Gastrocnemius medialis (tissue), 4 donors: ENCODE measurements at regions of chr22 and their contacts with region 1.

Region 1: DNA sequence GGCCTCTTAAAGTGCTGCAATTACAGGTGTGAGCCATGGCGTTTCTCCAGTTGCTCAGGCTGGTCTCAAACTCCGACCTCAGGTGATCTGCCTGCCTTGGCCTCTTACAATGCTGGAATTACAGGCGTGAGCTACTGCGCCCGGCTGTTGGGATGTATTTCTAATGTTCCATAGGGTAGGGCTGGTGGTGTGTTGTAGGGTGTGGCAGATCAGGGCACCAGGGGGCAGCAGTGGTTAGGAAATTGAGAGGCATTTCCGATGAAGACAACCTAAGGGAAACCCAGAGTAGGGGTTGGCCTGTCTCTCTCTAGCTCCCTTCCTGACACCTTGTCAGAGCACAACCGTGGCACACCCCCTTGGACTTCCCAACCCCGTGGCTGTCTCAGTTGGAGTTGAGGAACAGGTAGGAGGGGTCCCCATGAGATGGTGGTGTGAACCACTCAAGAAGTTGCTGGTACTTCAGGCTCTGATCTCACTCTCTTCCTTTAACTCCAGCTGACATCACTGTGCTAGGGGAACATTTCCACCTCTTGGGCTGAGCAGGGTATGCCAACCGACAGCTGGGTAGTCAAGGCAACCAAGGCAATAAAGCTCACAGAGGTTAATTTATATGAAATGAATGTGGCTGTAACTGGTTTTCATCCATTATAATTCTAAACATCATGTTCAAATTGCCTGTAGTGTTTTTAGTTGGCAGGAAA is 33.0 kb downstream of the YWHAH start:
- DNase-seq: peak; percentile 48 to 70
- ATAC-seq: peak; percentile 89 to 90
- H3K4me3 ChIP-seq: no peak overlapping the region
- H3K27ac ChIP-seq: no peak overlapping the region
- H3K4me1 ChIP-seq: no peaks in the 10 kb centered on the region
- H3K27me3 ChIP-seq: no peaks in the 10 kb centered on the region
- CTCF ChIP-seq: peak; percentile 70 to 84 (median 76)
- POLR2A ChIP-seq: no peak

Region 2: GRCh38 chr22:31652911-31653684 is 324.2 kb before region 1 on chr22:
- in situ Hi-C with region 1: no loop called
- intact Hi-C with region 1: no loop called
- DNase-seq: no peak
- ATAC-seq: no peak
- H3K4me3 ChIP-seq: no peak overlapping the region
- H3K27ac ChIP-seq: peak overlapping the region; percentile 49 to 72 (median 60)
- H3K4me1 ChIP-seq: peaks cover 23 to 32% of the 10 kb centered on the region in 2 donors
- H3K27me3 ChIP-seq: no peaks in the 10 kb centered on the region
- CTCF ChIP-seq: no peak
- POLR2A ChIP-seq: no peak

Region 3: GRCh38 chr22:32042924-32043790 is 65.9 kb after region 1 on chr22 and contains the start of gene SLC5A1:
- in situ Hi-C with region 1: no loop called
- intact Hi-C with region 1: loop called (anchors 5 kb)
- DNase-seq: no peak
- ATAC-seq: no peak
- H3K4me3 ChIP-seq: no peak within 1 kb of the TSS
- H3K27ac ChIP-seq: peak within 1 kb of the TSS in 1 of 4 donors; percentile 63
- H3K4me1 ChIP-seq: peaks cover 10 to 17% of the 10 kb centered on the region in 2 donors
- H3K27me3 ChIP-seq: no peaks in the 10 kb centered on the region
- CTCF ChIP-seq: no peak
- POLR2A ChIP-seq: no peak
- total RNA-seq, gene SLC5A1: 0.24 TPM in 1 of 4 donors, not detected in the others

Region 4: DNA sequence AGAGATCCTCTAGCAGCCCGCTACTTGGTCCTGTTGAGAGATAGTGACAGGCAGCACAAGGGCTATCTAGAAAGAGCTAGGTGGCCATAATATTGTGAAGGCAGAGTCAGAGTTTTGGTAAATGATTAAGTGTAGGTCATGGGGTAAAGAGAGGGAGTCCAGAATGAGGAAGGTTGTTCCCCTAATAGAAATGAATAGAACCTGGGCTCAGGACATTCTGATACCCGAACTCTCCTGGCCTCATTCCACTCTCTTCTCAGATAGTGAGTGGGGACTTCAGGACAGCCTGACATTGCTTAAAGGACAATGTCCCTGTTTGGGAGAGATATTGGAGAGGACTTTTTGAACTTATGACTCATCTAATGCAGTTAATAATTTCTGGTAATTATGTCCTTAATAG is 86.4 kb after region 1 on chr22:
- in situ Hi-C with region 1: no loop called
- intact Hi-C with region 1: no loop called
- DNase-seq: no peak
- ATAC-seq: no peak
- H3K4me3 ChIP-seq: no peak overlapping the region
- H3K27ac ChIP-seq: no peak overlapping the region
- H3K4me1 ChIP-seq: peaks cover 4 to 6% of the 10 kb centered on the region in 2 donors
- H3K27me3 ChIP-seq: no peaks in the 10 kb centered on the region
- CTCF ChIP-seq: no peak
- POLR2A ChIP-seq: no peak

Region 5: GRCh38 chr22:32080904-32081303 is 103.6 kb after region 1 on chr22:
- in situ Hi-C with region 1: loop called (anchors 5 to 10 kb)
- intact Hi-C with region 1: loop called (anchors 1 kb)
- DNase-seq: peak in 1 of 2 donors; percentile 25
- ATAC-seq: peak; percentile 75 to 77
- H3K4me3 ChIP-seq: no peak overlapping the region
- H3K27ac ChIP-seq: no peak overlapping the region
- H3K4me1 ChIP-seq: peaks cover 20 to 22% of the 10 kb centered on the region in 2 donors
- H3K27me3 ChIP-seq: no peaks in the 10 kb centered on the region
- CTCF ChIP-seq: peak; percentile 66 to 75 (median 70)
- POLR2A ChIP-seq: no peak

Region 6: DNA sequence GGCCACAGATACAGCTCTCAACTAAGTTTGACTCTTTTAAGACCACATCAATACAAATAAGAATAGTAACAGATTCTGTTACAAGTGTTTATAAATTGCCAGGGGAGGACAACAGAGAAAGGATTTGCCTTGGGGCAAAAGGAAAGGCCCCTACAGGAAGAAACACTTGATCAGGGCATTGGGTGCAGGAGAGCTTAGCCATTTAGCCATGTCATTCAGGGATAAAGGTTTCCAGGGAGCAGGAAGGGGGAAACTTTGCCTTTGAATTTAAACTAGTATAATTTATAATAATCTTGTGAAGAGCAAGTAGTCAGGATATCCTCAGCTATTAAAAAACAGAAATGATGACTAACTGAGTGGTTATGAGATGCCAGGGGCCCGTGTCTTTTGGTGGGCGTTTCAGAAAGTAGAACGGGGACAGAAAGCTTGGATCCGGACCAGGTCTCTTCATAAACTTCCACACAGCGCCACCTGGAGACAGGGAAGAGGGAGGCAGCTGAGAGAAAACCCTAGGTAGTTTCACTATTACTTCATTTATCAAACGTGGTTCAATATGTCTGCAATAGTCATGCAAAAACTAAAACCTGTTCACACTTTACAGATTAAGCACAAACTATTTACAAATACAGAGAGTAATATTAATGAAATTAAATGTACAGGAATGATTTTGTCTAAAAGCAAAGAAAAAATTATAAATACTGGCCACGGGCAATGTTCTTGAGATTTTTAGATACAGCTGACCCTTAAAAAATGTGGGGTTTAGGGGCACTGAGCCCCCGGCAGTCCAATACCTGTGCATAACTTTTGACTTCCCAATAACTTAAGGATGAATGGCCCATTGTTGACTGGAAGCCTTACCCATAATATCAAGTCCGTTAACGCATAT is 288.8 kb after region 1 on chr22:
- in situ Hi-C with region 1: loop called in 3 of 4 experiments (anchors 5 to 25 kb)
- intact Hi-C with region 1: loop called (anchors 1 kb)
- DNase-seq: peak; percentile 15 to 50
- ATAC-seq: peak; percentile 58 to 79
- H3K4me3 ChIP-seq: peak overlapping the region in 3 of 4 donors; percentile 17 to 25 (median 21)
- H3K27ac ChIP-seq: peak overlapping the region in 2 of 4 donors; percentile 9 to 23
- H3K4me1 ChIP-seq: peaks cover 3 to 4% of the 10 kb centered on the region in 2 donors
- H3K27me3 ChIP-seq: no peaks in the 10 kb centered on the region
- CTCF ChIP-seq: peak; percentile 56 to 79 (median 66)
- POLR2A ChIP-seq: no peak

Region 7: DNA sequence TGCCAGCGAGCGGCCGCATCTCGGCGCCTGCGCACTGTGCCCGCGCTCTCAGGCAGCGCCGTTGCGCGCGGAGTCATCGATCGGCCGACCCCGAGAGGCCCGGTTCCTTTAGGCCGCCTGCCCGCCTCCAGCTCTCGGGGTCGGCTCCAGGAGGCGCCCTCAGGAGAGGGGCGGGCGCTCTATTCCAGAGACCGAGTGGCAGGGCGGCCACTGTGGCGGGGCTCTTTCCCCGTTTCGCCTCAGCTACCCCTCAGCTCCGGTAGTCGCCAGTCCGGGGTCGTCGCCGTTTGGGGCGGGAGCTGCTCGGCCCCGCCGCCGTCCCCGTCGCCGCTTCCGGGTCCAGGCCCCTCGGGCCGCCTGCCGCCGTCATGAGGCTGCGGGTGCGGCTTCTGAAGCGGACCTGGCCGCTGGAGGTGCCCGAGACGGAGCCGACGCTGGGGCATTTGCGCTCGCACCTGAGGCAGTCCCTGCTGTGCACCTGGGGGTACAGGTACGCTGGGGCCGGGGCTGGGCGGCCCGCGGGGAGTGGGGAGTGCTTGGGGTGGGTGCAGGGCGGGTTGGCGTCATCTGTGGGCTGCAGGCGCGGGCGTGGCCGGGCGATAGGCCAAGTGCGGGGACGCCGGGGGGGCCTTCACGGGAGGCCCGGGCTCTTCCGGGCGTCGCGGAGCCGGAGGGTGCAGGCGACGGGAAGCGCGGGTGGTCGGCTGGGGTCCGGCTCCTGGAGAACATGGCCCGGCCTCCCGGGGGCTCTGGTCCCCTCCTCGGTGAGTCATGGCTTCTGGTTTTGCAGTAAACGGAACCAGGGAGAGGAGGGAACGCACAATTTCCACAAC is 497.6 kb after region 1 on chr22 and contains the start of gene FBXO7:
- in situ Hi-C with region 1: loop called in 3 of 4 experiments (anchors 25 kb)
- intact Hi-C with region 1: no loop called
- DNase-seq: peak; percentile 78 to 90
- ATAC-seq: peak; percentile 88 to 92
- H3K4me3 ChIP-seq: peak within 1 kb of the TSS; percentile 78 to 98 (median 84)
- H3K27ac ChIP-seq: peak within 1 kb of the TSS; percentile 92 to 99 (median 94)
- H3K4me1 ChIP-seq: peaks cover 25 to 29% of the 10 kb centered on the region in 2 donors
- H3K27me3 ChIP-seq: no peaks in the 10 kb centered on the region
- CTCF ChIP-seq: peak in 4 of 5 experiments; percentile 10 to 61 (median 46)
- POLR2A ChIP-seq: peak; percentile 72 to 75
- total RNA-seq, gene FBXO7: 30.6 to 40.7 (median 31.8) TPM

Region 8: GRCh38 chr22:33018232-33018864 is 1041.1 kb after region 1 on chr22:
- in situ Hi-C with region 1: loop called in 1 of 4 experiments (anchors 25 kb)
- intact Hi-C with region 1: no loop called
- DNase-seq: no peak
- ATAC-seq: no peak
- H3K4me3 ChIP-seq: no peak overlapping the region
- H3K27ac ChIP-seq: no peak overlapping the region
- H3K4me1 ChIP-seq: no peaks in the 10 kb centered on the region
- H3K27me3 ChIP-seq: no peaks in the 10 kb centered on the region
- CTCF ChIP-seq: peak in 4 of 5 experiments; percentile 52 to 79 (median 68)
- POLR2A ChIP-seq: no peak